Gastrocnemius medialis (tissue), 4 donors: ENCODE measurements at regions of chr12 and their contacts with region 1.

Region 1: GRCh38 chr12:133181238-133181959 is at the start of gene ZNF268:
- DNase-seq: peak; percentile 68 to 83
- ATAC-seq: peak; percentile 90 to 100
- H3K4me3 ChIP-seq: peak within 1 kb of the TSS; percentile 65 to 91 (median 84)
- H3K27ac ChIP-seq: peak within 1 kb of the TSS; percentile 44 to 76 (median 62)
- H3K4me1 ChIP-seq: peaks cover 7 to 9% of the 10 kb centered on the region in 2 donors
- H3K27me3 ChIP-seq: no peaks in the 10 kb centered on the region
- CTCF ChIP-seq: peak; percentile 40 to 76 (median 75)
- POLR2A ChIP-seq: no peak
- total RNA-seq, gene ZNF268: 3.8 to 8.9 (median 4.3) TPM

Region 2: GRCh38 chr12:132748319-132748718 is 433.1 kb before region 1 on chr12:
- in situ Hi-C with region 1: no loop called
- intact Hi-C with region 1: no loop called
- DNase-seq: no peak
- ATAC-seq: no peak
- H3K4me3 ChIP-seq: no peak overlapping the region
- H3K27ac ChIP-seq: no peak overlapping the region
- H3K4me1 ChIP-seq: no peaks in the 10 kb centered on the region
- H3K27me3 ChIP-seq: no peaks in the 10 kb centered on the region
- CTCF ChIP-seq: no peak
- POLR2A ChIP-seq: no peak

Region 3: GRCh38 chr12:133010657-133011297 is 170.6 kb before region 1 on chr12:
- in situ Hi-C with region 1: no loop called
- intact Hi-C with region 1: no loop called
- DNase-seq: no peak
- ATAC-seq: no peak
- H3K4me3 ChIP-seq: peak overlapping the region in 1 of 4 donors; percentile 31
- H3K27ac ChIP-seq: no peak overlapping the region
- H3K4me1 ChIP-seq: no peaks in the 10 kb centered on the region
- H3K27me3 ChIP-seq: no peaks in the 10 kb centered on the region
- CTCF ChIP-seq: no peak
- POLR2A ChIP-seq: no peak

Region 4: DNA sequence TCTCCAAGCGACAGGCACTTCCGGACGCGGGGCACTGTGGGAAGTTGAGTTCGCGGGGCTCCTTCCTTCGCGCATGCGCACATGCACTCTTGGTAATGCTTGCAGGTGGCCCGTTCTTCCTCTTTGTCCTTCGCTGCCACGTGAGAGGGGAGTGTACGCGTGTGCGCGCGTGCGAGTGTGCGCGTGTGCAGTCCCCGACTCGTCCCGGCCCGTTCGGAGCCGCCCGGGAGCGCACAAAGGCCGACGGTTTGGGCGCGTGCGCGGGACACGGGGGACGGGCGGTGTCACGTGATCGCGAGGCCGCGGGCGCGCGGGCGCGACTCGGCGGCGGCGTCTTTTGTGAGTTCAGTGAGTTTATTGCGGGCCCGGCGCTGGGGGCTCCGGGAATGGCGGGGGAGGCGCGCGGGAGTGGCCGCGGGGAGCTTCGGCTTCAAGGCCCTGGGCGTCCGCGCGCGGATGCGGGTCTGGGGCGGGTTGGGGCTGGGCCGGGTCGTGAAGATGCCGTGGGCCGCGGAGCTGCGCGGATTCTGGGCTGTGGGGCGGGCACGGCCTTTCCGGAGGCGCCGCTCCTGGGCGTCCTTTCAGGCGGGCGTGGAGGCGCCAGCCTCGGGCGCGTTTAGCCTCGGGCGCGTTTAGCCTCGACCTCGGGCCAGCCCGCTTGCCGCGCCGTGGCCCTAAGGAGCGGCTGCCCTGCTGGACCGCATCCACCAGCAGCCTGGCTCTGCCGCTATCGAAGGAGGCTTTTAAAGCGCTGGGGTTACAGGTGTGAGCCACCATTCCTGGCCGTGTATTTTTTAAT is 144.0 kb before region 1 on chr12 and contains the start of gene ZNF84:
- in situ Hi-C with region 1: no loop called
- intact Hi-C with region 1: loop called (anchors 1 kb)
- DNase-seq: peak; percentile 93 to 94
- ATAC-seq: peak; percentile 96 to 99
- H3K4me3 ChIP-seq: peak within 1 kb of the TSS; percentile 74 to 90 (median 80)
- H3K27ac ChIP-seq: peak within 1 kb of the TSS; percentile 83 to 97 (median 91)
- H3K4me1 ChIP-seq: peaks cover 11 to 12% of the 10 kb centered on the region in 2 donors
- H3K27me3 ChIP-seq: no peaks in the 10 kb centered on the region
- CTCF ChIP-seq: peak in 2 of 5 experiments; percentile 23 to 47
- POLR2A ChIP-seq: peak; percentile 60 to 61
- total RNA-seq, gene ZNF84: 5.3 to 20.9 (median 13.5) TPM